H1 (cell line): ENCODE measurements at regions of chr1 and their contacts with region 1.

Region 1: GRCh38 chr1:56709269-56709880 is 64.3 kb downstream of the PRKAA2 start:
- DNase-seq: no peak
- H3K4me3 ChIP-seq: no peak overlapping the region
- H3K27ac ChIP-seq: no peak overlapping the region
- H3K4me1 ChIP-seq: no peaks in the 10 kb centered on the region
- H3K27me3 ChIP-seq: no peaks in the 10 kb centered on the region
- CTCF ChIP-seq: peak in 2 of 3 experiments; percentile 32 to 45; a peak in 2 of 4 replicates
- EP300 ChIP-seq: no peak
- POLR2A ChIP-seq: no peak
- RAD21 ChIP-seq: peak; percentile 53 to 56

Region 2: GRCh38 chr1:56666112-56666608 is 43.2 kb before region 1 on chr1:
- CTCF ChIA-PET with region 1: interaction called, 18 read pairs
- POLR2A ChIA-PET with region 1: no interaction called
- DNase-seq: no peak
- H3K4me3 ChIP-seq: no peak overlapping the region
- H3K27ac ChIP-seq: no peak overlapping the region
- H3K4me1 ChIP-seq: no peaks in the 10 kb centered on the region
- H3K27me3 ChIP-seq: peaks cover 0 to 1% (median 0%) of the 10 kb centered on the region in 4 experiments; a peak in 1 of 7 replicates
- CTCF ChIP-seq: peak in 1 of 3 experiments; percentile 21; a peak in 1 of 4 replicates
- EP300 ChIP-seq: no peak
- POLR2A ChIP-seq: no peak
- RAD21 ChIP-seq: peak; percentile 38 to 46